ENCODE measurements at regions of chr19 and their contacts with region 1.

Region 1: GRCh38 chr19:17170538-17171297 is 44.4 kb upstream of the USE1 start:
- DNase-seq: no peak
- ATAC-seq: no peak
- H3K4me3 ChIP-seq: no peak overlapping the region
- H3K27ac ChIP-seq: no peak overlapping the region
- H3K4me1 ChIP-seq: no peaks in the 10 kb centered on the region
- H3K27me3 ChIP-seq: no peaks in the 10 kb centered on the region
- CTCF ChIP-seq: no peak

Region 2: DNA sequence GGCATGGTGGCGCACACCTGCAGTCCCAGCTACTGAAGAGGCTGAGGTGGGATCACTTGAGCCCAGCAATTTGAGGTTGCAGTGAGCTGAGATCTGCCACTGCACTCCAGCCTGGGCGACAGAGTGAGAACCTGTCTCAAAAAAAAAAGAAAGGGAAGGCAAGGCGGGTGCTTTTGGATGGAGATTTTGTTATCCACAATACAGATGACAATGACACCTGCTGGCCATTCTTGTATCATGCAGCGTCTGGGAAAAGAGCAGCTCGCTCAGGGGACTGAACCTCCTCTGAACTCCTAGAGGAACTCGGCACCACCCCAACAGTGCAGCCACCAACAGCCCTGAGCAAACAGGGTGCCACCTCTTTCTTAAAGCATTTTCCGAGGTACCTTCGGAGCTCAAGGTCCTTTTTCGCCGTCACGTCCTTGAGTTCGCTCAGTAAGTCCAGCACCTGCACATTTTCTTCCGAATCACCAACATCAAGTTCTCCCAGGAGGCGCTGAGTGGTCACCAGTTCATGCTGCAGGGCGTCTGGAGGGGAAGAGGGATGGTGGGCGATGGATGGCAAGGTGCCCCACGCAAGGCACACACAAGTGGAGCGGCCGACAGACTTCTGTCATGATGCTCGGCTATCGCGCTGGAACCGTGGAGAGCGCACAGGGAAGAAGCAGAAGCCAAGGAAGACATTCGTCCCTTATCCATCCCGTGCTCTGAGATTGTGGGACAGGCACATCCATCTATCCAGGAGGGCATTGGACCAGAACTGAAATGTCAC is 118.1 kb before region 1 on chr19:
- intact Hi-C with region 1: no loop called
- DNase-seq: no peak
- ATAC-seq: peak; percentile 80
- H3K4me3 ChIP-seq: no peak overlapping the region
- H3K27ac ChIP-seq: no peak overlapping the region
- H3K4me1 ChIP-seq: no peaks in the 10 kb centered on the region
- H3K27me3 ChIP-seq: no peaks in the 10 kb centered on the region
- CTCF ChIP-seq: peak; percentile 69

Region 3: GRCh38 chr19:17069218-17069617 is 101.5 kb before region 1 on chr19:
- intact Hi-C with region 1: loop called (anchors 5 kb)
- DNase-seq: no peak
- ATAC-seq: no peak
- H3K4me3 ChIP-seq: no peak overlapping the region
- H3K27ac ChIP-seq: no peak overlapping the region
- H3K4me1 ChIP-seq: peaks cover 7% of the 10 kb centered on the region
- H3K27me3 ChIP-seq: no peaks in the 10 kb centered on the region
- CTCF ChIP-seq: no peak

Region 4: GRCh38 chr19:17327651-17328516 is 157.2 kb after region 1 on chr19:
- intact Hi-C with region 1: no loop called
- DNase-seq: peak; percentile 92
- ATAC-seq: peak; percentile 87
- H3K4me3 ChIP-seq: peak overlapping the region; percentile 47
- H3K27ac ChIP-seq: peak overlapping the region; percentile 66
- H3K4me1 ChIP-seq: no peaks in the 10 kb centered on the region
- H3K27me3 ChIP-seq: no peaks in the 10 kb centered on the region
- CTCF ChIP-seq: peak; percentile 29